ENCODE measurements at regions of chr10 and their contacts with region 1.

Region 1: DNA sequence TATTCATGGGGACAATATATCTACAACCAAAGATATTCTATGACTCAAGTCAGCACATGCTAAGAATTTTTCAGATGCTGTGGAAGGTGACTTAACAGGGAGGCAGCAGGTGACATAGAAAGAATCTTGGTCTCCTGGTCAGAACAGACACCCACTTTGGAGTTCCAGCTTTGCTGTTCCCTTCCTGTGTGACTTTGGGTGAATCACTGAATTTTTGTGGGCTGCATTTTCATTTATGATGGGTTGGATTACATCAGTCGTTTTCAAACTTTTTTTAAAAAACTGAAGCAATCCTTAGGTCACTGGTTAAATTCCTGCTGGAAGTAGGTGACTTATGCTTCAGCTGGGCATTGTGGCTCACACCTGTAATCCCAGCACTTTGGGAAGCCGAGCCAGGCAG is 24.9 kb downstream of the RGR start:
- DNase-seq: no peak
- H3K4me3 ChIP-seq: no peak overlapping the region
- H3K4me3 Mint-ChIP-seq: no peak overlapping the region
- H3K27ac Mint-ChIP-seq: no peak overlapping the region
- H3K4me1 ChIP-seq: peaks cover 6% of the 10 kb centered on the region
- H3K4me1 Mint-ChIP-seq: peaks cover 13% of the 10 kb centered on the region
- H3K27me3 ChIP-seq: no peaks in the 10 kb centered on the region
- H3K27me3 Mint-ChIP-seq: no peaks in the 10 kb centered on the region
- CTCF ChIP-seq: no peak

Region 2: GRCh38 chr10:84328418-84329195 is 58.8 kb after region 1 on chr10 and contains the start of gene CCSER2:
- CTCF ChIA-PET with region 1: interaction called, 5 read pairs
- POLR2A ChIA-PET with region 1: no interaction called
- intact Hi-C with region 1: loop called (anchors 1 kb)
- DNase-seq: peak; percentile 96 to 98
- H3K4me3 ChIP-seq: peak within 1 kb of the TSS; percentile 76
- H3K4me3 Mint-ChIP-seq: peak within 1 kb of the TSS; percentile 90
- H3K27ac Mint-ChIP-seq: peak within 1 kb of the TSS; percentile 87
- H3K4me1 ChIP-seq: peaks cover 26% of the 10 kb centered on the region
- H3K4me1 Mint-ChIP-seq: peaks cover 14% of the 10 kb centered on the region
- H3K27me3 ChIP-seq: no peaks in the 10 kb centered on the region
- H3K27me3 Mint-ChIP-seq: no peaks in the 10 kb centered on the region
- CTCF ChIP-seq: no peak
- total RNA-seq, gene CCSER2: 23.1 and 28.3 TPM in 2 replicates

Region 3: DNA sequence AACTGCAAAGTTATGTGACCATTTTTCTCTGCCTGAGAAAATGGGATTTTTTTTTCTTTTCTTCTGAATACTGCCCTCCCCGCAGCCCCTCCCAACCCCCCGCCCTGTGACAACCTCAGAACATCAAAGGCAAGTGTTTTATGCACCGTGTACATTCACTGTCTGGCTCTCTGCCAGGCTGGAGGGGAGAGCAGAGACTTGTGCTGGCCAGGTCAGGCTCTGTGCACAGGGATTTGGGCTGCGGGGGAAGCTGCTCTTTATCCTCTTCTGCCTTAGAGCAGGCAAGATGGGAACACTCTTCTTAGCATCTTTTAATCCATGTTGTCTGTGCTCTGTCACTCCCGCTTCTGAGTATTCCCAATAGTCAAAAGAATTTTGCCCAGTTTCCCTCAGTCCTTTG is 253.8 kb after region 1 on chr10:
- CTCF ChIA-PET with region 1: no interaction called
- POLR2A ChIA-PET with region 1: no interaction called
- intact Hi-C with region 1: no loop called
- DNase-seq: no peak
- H3K4me3 ChIP-seq: no peak overlapping the region
- H3K4me3 Mint-ChIP-seq: no peak overlapping the region
- H3K27ac Mint-ChIP-seq: no peak overlapping the region
- H3K4me1 ChIP-seq: peaks cover 8% of the 10 kb centered on the region
- H3K4me1 Mint-ChIP-seq: peaks cover 14% of the 10 kb centered on the region
- H3K27me3 ChIP-seq: no peaks in the 10 kb centered on the region
- H3K27me3 Mint-ChIP-seq: no peaks in the 10 kb centered on the region
- CTCF ChIP-seq: no peak

Measured in Caco-2 (cell line).